CD8-positive, alpha-beta memory T cell (primary cell): ENCODE measurements at regions of chr19 and their contacts with region 1.

Region 1: GRCh38 chr19:1672038-1672768 is 19.8 kb upstream of the TCF3 start:
- DNase-seq: peak; percentile 32 to 73 (median 43)
- H3K4me3 ChIP-seq: no peak overlapping the region
- H3K4me3 Mint-ChIP-seq: peak overlapping the region in 2 of 7 donors; percentile 2 to 78
- H3K27ac ChIP-seq: peak overlapping the region; percentile 54
- H3K27ac Mint-ChIP-seq: no peak overlapping the region
- H3K4me1 ChIP-seq: peaks cover 9% of the 10 kb centered on the region
- H3K4me1 Mint-ChIP-seq: peaks cover 12 to 18% (median 16%) of the 10 kb centered on the region in 3 donors
- H3K27me3 ChIP-seq: peaks cover 51% of the 10 kb centered on the region
- H3K27me3 Mint-ChIP-seq: peaks cover 38 to 56% of the 10 kb centered on the region in 2 donors

Region 2: DNA sequence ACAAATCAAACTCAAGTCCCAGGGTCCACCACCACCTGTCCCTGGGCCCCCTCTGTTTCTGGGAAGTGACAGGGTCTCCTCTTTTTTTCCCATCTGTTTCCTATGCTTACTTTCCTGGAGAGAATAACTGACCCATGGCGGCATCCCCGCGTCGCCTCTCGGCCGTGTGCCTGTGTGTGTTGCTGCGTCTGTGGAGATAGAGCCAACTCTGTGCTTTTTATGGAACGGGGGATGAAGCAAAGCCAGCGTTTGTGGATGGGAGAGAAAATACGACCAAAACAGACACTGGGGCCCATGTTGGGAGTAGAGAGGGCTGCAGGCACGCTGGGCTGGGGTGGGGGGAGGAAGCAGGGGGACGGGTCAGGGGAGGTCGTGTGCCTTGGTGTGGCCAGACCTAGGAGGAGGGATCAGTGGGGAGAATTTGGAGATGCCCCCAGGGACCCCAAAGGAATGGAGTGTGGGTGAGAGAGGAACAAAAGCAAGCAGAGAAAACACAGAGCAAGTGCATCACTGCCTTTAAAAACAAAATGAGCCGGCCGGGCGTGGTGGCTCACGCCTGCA is 131.8 kb before region 1 on chr19:
- CTCF ChIA-PET with region 1: interaction called, 42 read pairs
- POLR2A ChIA-PET with region 1: no interaction called
- DNase-seq: no peak
- H3K4me3 ChIP-seq: no peak overlapping the region
- H3K4me3 Mint-ChIP-seq: no peak overlapping the region
- H3K27ac ChIP-seq: no peak overlapping the region
- H3K27ac Mint-ChIP-seq: no peak overlapping the region
- H3K4me1 ChIP-seq: no peaks in the 10 kb centered on the region
- H3K4me1 Mint-ChIP-seq: no peaks in the 10 kb centered on the region
- H3K27me3 ChIP-seq: no peaks in the 10 kb centered on the region
- H3K27me3 Mint-ChIP-seq: peaks cover 18 to 29% of the 10 kb centered on the region in 2 donors

Region 3: GRCh38 chr19:1632462-1633268 is 39.5 kb before region 1 on chr19:
- CTCF ChIA-PET with region 1: no interaction called
- POLR2A ChIA-PET with region 1: no interaction called
- DNase-seq: no peak
- H3K4me3 ChIP-seq: no peak overlapping the region
- H3K4me3 Mint-ChIP-seq: no peak overlapping the region
- H3K27ac ChIP-seq: peak overlapping the region; percentile 24
- H3K27ac Mint-ChIP-seq: no peak overlapping the region
- H3K4me1 ChIP-seq: no peaks in the 10 kb centered on the region
- H3K4me1 Mint-ChIP-seq: peaks cover 0 to 3% (median 0%) of the 10 kb centered on the region in 3 donors
- H3K27me3 ChIP-seq: no peaks in the 10 kb centered on the region
- H3K27me3 Mint-ChIP-seq: no peaks in the 10 kb centered on the region

Region 4: GRCh38 chr19:1652471-1653299 is 19.5 kb before region 1 on chr19 and contains the start of gene TCF3:
- CTCF ChIA-PET with region 1: interaction called, 10 read pairs
- POLR2A ChIA-PET with region 1: interaction called, 6 read pairs
- DNase-seq: peak; percentile 96 to 100 (median 99)
- H3K4me3 ChIP-seq: peak within 1 kb of the TSS; percentile 83
- H3K4me3 Mint-ChIP-seq: peak within 1 kb of the TSS; percentile 82 to 99 (median 93)
- H3K27ac ChIP-seq: peak within 1 kb of the TSS; percentile 98
- H3K27ac Mint-ChIP-seq: peak within 1 kb of the TSS; percentile 93 to 98 (median 98)
- H3K4me1 ChIP-seq: peaks cover 13% of the 10 kb centered on the region
- H3K4me1 Mint-ChIP-seq: peaks cover 17 to 27% (median 18%) of the 10 kb centered on the region in 3 donors
- H3K27me3 ChIP-seq: no peaks in the 10 kb centered on the region
- H3K27me3 Mint-ChIP-seq: peaks cover 6 to 10% of the 10 kb centered on the region in 2 donors
- total RNA-seq, gene TCF3: 96.0 to 97.0 TPM

Region 5: GRCh38 chr19:1707240-1707639 is 35.0 kb after region 1 on chr19:
- CTCF ChIA-PET with region 1: no interaction called
- POLR2A ChIA-PET with region 1: no interaction called
- DNase-seq: no peak
- H3K4me3 ChIP-seq: no peak overlapping the region
- H3K4me3 Mint-ChIP-seq: no peak overlapping the region
- H3K27ac ChIP-seq: no peak overlapping the region
- H3K27ac Mint-ChIP-seq: no peak overlapping the region
- H3K4me1 ChIP-seq: no peaks in the 10 kb centered on the region
- H3K4me1 Mint-ChIP-seq: no peaks in the 10 kb centered on the region
- H3K27me3 ChIP-seq: peaks cover 4% of the 10 kb centered on the region
- H3K27me3 Mint-ChIP-seq: peaks cover 14 to 31% of the 10 kb centered on the region in 2 donors

Region 6: DNA sequence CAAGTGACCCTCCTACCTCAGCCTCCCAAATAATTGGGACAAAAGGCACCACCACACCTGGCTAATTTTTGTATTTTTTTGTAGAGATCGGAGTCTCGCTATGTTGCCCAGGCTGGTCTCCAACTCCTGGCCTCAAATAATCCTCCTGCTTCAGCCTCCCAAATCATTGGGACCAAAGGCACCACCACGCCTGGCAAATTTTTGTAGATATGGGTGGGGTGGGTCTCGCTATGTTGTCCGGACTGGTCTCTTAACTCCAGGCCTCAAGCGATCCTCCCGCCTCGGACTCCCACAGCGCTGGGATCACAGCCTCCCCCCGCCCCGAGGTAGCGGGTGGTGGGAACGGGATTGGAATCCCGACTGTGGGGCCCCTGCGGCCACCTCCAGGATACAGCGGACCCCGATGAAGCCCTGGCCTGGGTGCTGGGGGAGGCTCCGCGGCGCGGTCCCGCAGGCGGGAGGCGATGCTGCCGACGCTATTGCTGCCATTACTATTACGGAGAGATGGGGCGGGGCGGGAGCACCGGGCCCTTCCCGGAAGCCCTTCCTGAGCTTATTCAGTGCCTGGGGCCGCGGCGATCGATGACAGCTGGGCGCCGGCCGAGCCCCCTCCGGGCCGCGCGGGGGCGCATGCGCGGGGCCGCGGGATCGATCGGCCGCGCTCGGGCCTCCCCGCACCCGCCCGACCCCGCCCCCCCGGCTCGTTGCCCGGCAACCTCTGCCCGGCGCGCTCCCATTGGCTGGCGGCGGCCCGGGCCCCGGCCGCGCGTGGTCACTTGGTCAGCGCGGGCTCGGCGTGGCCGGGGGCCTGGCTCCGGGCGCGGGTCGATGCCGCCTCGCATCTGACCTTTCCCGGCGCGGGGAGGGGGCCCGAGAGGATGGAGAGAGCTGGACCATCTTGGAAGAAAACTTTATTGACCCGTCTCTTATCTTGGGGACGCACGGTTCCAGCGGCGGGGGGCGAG is 53.2 kb after region 1 on chr19:
- CTCF ChIA-PET with region 1: no interaction called
- POLR2A ChIA-PET with region 1: no interaction called
- DNase-seq: peak in 1 of 5 donors; percentile 22
- H3K4me3 ChIP-seq: no peak overlapping the region
- H3K4me3 Mint-ChIP-seq: peak overlapping the region in 5 of 7 donors; percentile 26 to 74 (median 46)
- H3K27ac ChIP-seq: no peak overlapping the region
- H3K27ac Mint-ChIP-seq: no peak overlapping the region
- H3K4me1 ChIP-seq: peaks cover 7% of the 10 kb centered on the region
- H3K4me1 Mint-ChIP-seq: peaks cover 4 to 5% (median 4%) of the 10 kb centered on the region in 3 donors
- H3K27me3 ChIP-seq: peaks cover 19% of the 10 kb centered on the region
- H3K27me3 Mint-ChIP-seq: peaks cover 53 to 56% of the 10 kb centered on the region in 2 donors